ENCODE measurements at regions of chr14 and their contacts with region 1.

Region 1: GRCh38 chr14:22570132-22570949 is 18.7 kb downstream of the DAD1 start:
- DNase-seq: peak; percentile 69 to 99 (median 85)
- ATAC-seq: peak; percentile 87
- H3K4me3 ChIP-seq: peak overlapping the region; percentile 34 to 38
- H3K4me3 Mint-ChIP-seq: peak overlapping the region; percentile 73
- H3K27ac ChIP-seq: peak overlapping the region; percentile 58 to 97
- H3K27ac Mint-ChIP-seq: peak overlapping the region; percentile 97
- H3K4me1 ChIP-seq: peaks cover 51% of the 10 kb centered on the region
- H3K4me1 Mint-ChIP-seq: peaks cover 54% of the 10 kb centered on the region
- H3K27me3 ChIP-seq: no peaks in the 10 kb centered on the region
- H3K27me3 Mint-ChIP-seq: no peaks in the 10 kb centered on the region
- CTCF ChIP-seq: peak; percentile 99

Region 2: DNA sequence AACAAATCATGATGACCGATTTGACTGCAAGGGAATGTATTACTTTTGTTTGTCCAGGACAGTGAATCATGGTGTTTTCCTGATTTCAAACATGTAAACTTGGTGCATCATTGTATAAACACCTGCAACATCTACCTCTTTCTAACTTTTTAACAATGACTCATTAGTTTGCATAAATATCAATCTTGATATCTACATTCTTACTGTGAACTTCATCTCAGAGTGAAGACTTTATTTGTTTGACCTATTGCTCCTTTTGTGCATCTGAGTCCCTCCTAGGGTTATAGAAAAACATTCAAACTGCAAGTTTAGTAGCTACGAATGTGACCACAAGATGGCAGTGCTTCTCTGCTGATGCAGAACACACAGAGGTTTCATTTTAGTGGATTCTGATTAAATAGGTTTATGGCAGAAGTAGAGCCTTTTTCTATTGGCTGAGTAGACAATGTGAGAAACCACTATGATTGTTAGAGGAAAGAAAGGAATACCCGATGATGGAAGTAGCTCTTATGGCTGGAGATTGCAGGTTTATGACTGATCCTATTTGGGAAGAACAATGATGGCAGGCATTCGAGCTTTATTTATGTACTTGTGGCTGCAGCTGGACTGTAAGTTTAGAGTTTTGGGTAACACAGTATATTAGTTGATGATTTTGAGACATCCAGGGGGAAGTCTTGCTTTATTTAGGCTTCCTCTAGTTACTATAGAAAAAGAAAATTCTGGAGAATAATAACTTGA is 652.5 kb before region 1 on chr14:
- CTCF ChIA-PET with region 1: interaction called, 11 read pairs
- POLR2A ChIA-PET with region 1: interaction called, 6 read pairs
- intact Hi-C with region 1: loop called (anchors 2 to 5 kb)
- DNase-seq: peak in 8 of 9 experiments; percentile 38 to 83 (median 65)
- ATAC-seq: peak; percentile 55
- H3K4me3 ChIP-seq: peak overlapping the region; percentile 14 to 16
- H3K4me3 Mint-ChIP-seq: peak overlapping the region; percentile 83
- H3K27ac ChIP-seq: no peak overlapping the region
- H3K27ac Mint-ChIP-seq: peak overlapping the region; percentile 91
- H3K4me1 ChIP-seq: peaks cover 36% of the 10 kb centered on the region
- H3K4me1 Mint-ChIP-seq: peaks cover 51% of the 10 kb centered on the region
- H3K27me3 ChIP-seq: no peaks in the 10 kb centered on the region
- H3K27me3 Mint-ChIP-seq: no peaks in the 10 kb centered on the region
- CTCF ChIP-seq: peak; percentile 79

Region 3: GRCh38 chr14:22497144-22497423 is 73.3 kb before region 1 on chr14:
- CTCF ChIA-PET with region 1: interaction called, 16 read pairs
- POLR2A ChIA-PET with region 1: interaction called, 4 read pairs
- intact Hi-C with region 1: no loop called
- DNase-seq: peak in 1 of 9 experiments; percentile 34
- ATAC-seq: peak; percentile 27
- H3K4me3 ChIP-seq: peak overlapping the region; percentile 53 to 54
- H3K4me3 Mint-ChIP-seq: peak overlapping the region; percentile 84
- H3K27ac ChIP-seq: peak overlapping the region; percentile 38 to 59
- H3K27ac Mint-ChIP-seq: peak overlapping the region; percentile 99
- H3K4me1 ChIP-seq: peaks cover 9% of the 10 kb centered on the region
- H3K4me1 Mint-ChIP-seq: peaks cover 50% of the 10 kb centered on the region
- H3K27me3 ChIP-seq: no peaks in the 10 kb centered on the region
- H3K27me3 Mint-ChIP-seq: no peaks in the 10 kb centered on the region
- CTCF ChIP-seq: no peak

Region 4: GRCh38 chr14:22549981-22550673 is 20.2 kb before region 1 on chr14:
- CTCF ChIA-PET with region 1: interaction called, 408 read pairs
- POLR2A ChIA-PET with region 1: interaction called, 167 read pairs
- intact Hi-C with region 1: no loop called
- DNase-seq: peak in 7 of 9 experiments; percentile 53 to 86 (median 78)
- ATAC-seq: peak; percentile 63
- H3K4me3 ChIP-seq: peak overlapping the region; percentile 2 to 14
- H3K4me3 Mint-ChIP-seq: peak overlapping the region; percentile 79
- H3K27ac ChIP-seq: peak overlapping the region; percentile 55 to 97
- H3K27ac Mint-ChIP-seq: peak overlapping the region; percentile 93
- H3K4me1 ChIP-seq: peaks cover 96% of the 10 kb centered on the region
- H3K4me1 Mint-ChIP-seq: peaks cover 94% of the 10 kb centered on the region
- H3K27me3 ChIP-seq: no peaks in the 10 kb centered on the region
- H3K27me3 Mint-ChIP-seq: no peaks in the 10 kb centered on the region
- CTCF ChIP-seq: no peak

Region 5: DNA sequence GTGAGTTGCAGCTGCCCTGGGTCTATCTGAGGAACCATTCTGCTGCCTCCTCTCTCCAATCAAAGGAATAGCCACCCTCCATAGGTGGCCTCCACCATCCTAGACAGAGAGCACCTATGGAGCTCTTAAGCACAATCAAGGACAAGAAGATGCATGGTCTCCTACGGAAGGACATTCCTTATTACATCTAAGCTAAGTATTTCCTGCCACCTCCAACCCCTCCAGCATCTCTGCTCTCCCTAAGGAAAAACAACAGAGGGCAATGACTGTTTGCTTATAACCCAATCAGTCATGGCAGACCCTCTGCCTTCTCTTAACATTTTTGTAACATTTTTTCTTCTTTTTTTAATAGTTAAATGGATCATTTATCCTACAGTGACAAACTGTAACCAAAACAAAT is 88.6 kb after region 1 on chr14:
- CTCF ChIA-PET with region 1: interaction called, 89 read pairs
- POLR2A ChIA-PET with region 1: no interaction called
- intact Hi-C with region 1: no loop called
- DNase-seq: no peak
- ATAC-seq: no peak
- H3K4me3 ChIP-seq: no peak overlapping the region
- H3K4me3 Mint-ChIP-seq: no peak overlapping the region
- H3K27ac ChIP-seq: no peak overlapping the region
- H3K27ac Mint-ChIP-seq: no peak overlapping the region
- H3K4me1 ChIP-seq: no peaks in the 10 kb centered on the region
- H3K4me1 Mint-ChIP-seq: no peaks in the 10 kb centered on the region
- H3K27me3 ChIP-seq: no peaks in the 10 kb centered on the region
- H3K27me3 Mint-ChIP-seq: no peaks in the 10 kb centered on the region
- CTCF ChIP-seq: no peak

Region 6: GRCh38 chr14:22852940-22853767 is 282.8 kb after region 1 on chr14:
- CTCF ChIA-PET with region 1: interaction called, 50 read pairs
- POLR2A ChIA-PET with region 1: interaction called, 8 read pairs
- intact Hi-C with region 1: loop called (anchors 1 kb)
- DNase-seq: peak; percentile 83 to 96 (median 88)
- ATAC-seq: peak; percentile 96
- H3K4me3 ChIP-seq: peak overlapping the region; percentile 58 to 96
- H3K4me3 Mint-ChIP-seq: peak overlapping the region; percentile 83
- H3K27ac ChIP-seq: no peak overlapping the region
- H3K27ac Mint-ChIP-seq: peak overlapping the region; percentile 41
- H3K4me1 ChIP-seq: peaks cover 10% of the 10 kb centered on the region
- H3K4me1 Mint-ChIP-seq: peaks cover 9% of the 10 kb centered on the region
- H3K27me3 ChIP-seq: peaks cover 0 to 8% of the 10 kb centered on the region in 2 experiments
- H3K27me3 Mint-ChIP-seq: peaks cover 15% of the 10 kb centered on the region
- CTCF ChIP-seq: peak; percentile 86

Region 7: DNA sequence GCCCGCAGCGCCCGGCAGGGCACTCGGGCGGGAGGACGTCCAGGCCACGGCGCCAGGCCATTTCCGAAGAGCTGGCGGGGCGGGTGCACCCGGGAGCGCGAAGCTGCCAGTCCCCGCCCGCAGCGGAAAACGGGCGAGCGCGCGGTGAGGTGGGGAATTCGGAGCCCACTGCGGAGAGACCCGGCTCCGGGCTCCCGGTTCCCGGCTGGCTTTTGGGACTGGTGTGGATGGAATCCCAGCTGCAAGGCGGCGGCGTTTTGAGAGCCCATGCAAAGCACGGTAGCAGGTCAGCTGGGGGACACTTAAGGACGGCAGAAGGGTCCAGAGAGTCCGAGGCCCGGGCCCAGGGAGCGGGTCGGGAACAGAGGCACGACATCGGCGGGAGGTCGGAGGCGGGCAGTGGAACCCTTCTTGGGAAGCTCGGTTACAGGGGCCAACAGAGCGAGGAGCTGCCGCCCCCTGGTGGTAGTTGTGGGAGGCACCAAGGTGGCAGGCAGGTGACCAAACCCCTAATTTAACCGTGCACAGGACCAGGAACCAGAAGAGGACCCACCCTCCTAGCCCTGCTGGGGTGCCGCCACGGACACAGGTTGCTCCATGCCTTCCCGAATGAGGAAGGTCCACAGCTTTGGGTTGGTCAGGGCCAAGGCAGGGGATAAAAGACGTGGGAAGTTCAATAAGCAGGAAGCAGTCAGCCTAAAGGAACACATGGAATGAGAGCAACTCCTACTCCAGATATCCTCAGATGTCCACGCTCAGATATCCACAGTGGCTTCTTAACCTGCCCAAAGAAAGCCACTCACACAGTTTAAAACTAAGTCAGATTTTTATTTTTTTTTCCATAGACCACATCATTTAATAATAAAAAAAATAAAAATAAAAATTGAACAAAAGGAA is 487.7 kb after region 1 on chr14:
- CTCF ChIA-PET with region 1: interaction called, 13 read pairs
- POLR2A ChIA-PET with region 1: no interaction called
- intact Hi-C with region 1: loop called (anchors 1 to 2 kb)
- DNase-seq: peak; percentile 70 to 92 (median 88)
- ATAC-seq: peak; percentile 70
- H3K4me3 ChIP-seq: peak overlapping the region; percentile 56 to 84
- H3K4me3 Mint-ChIP-seq: peak overlapping the region; percentile 87
- H3K27ac ChIP-seq: no peak overlapping the region
- H3K27ac Mint-ChIP-seq: peak overlapping the region; percentile 18
- H3K4me1 ChIP-seq: peaks cover 10% of the 10 kb centered on the region
- H3K4me1 Mint-ChIP-seq: peaks cover 17% of the 10 kb centered on the region
- H3K27me3 ChIP-seq: no peaks in the 10 kb centered on the region
- H3K27me3 Mint-ChIP-seq: no peaks in the 10 kb centered on the region
- CTCF ChIP-seq: peak; percentile 95